ENCODE measurements at regions of chr10 and their contacts with region 1.

Region 1: DNA sequence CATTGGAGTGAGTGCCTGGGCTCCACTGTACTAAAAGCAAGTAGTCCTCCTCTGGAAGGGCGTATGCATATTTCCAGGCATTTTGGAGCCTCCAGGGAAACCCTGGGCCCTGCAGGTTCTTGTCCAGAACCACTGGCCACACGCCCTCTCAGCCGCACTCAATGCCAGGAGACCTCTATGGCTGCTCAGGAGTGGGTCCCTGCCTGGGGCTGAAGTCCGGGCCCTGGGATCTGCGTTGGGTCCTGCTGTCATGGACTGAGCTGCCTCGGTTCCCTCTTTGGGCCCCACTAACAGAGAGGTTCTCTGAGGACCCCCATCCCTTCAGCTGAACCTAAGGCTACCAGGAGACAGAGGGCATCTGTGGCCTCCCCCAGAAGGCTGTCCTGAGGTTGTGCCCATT is 58.3 kb downstream of the GRK5 start:
- DNase-seq: no peak
- H3K4me3 ChIP-seq: no peak overlapping the region
- H3K27ac ChIP-seq: no peak overlapping the region
- H3K4me1 ChIP-seq: no peaks in the 10 kb centered on the region
- H3K27me3 ChIP-seq: no peaks in the 10 kb centered on the region
- CTCF ChIP-seq: no peak
- POLR2A ChIP-seq: no peak

Region 2: DNA sequence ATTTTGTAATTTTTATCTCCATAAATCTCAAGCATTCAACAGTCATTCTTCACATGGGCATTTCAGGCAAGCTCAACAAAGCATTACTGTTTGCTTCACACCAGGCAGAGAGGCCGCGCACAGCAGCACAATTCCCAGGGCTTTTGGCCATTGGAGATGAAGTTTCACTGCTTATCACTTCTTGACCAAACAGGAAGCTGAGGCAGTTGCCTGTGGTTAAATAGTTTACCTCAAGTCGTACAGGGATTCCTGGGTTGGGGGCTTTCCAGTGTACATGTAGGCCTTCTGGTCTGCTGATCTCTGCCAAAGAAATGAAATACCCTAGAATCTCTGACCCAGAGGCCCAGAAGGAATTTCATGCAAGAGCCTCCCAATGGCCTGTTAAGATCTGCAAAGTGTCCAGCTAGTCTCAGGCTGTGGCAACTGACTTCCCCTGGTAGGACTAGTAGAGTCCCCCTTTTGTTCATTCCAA is 75.8 kb before region 1 on chr10:
- intact Hi-C with region 1: loop called (anchors 2 kb)
- DNase-seq: no peak
- H3K4me3 ChIP-seq: no peak overlapping the region
- H3K27ac ChIP-seq: no peak overlapping the region
- H3K4me1 ChIP-seq: no peaks in the 10 kb centered on the region
- H3K27me3 ChIP-seq: no peaks in the 10 kb centered on the region
- CTCF ChIP-seq: no peak
- POLR2A ChIP-seq: no peak

Measured in breast epithelium (tissue), 4 donors.